ENCODE measurements at regions of chr3 and their contacts with region 1.

Region 1: DNA sequence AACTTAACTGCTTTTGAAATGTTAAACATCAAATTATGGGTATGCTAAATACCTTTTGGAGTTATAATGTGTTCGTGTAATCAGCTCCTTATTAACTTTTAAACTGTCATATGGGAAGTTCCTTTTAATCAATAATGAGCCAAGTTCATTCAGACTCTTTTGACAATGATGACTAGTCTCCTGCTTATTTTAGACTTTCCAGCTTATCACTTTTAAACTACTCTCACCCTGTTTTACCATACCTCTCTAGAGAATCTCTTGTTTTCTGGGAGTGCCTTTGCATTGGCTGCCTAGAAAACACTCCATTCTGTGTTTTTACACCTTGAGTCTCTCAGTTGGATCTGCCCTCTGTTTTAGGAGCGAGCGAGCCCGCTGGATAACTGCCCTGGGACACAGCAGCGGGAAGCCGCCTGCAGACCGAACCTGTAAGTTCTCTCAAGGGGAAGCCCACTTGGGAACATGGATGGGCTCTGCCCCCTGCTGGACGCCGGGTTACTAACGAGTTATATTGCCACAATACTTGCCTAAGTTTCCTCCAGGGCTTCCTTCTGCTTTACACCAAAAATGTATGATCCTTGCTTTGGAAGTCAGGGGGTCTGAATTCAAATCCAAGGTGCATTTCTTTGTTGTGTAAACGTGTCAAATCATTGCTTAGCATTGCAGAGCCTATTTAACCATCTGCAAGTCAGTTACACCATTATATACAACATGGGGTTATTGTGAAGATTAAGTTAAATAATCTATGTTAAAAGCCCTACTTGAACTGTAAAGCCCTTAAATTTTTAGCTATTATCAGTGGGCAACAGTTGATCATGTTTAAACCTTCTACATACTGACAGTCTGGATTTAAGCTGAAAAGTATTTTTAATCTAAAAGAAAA is 71.3 kb downstream of the DHX36 start:
- DNase-seq: peak; percentile 97

Region 2: GRCh38 chr3:154003649-154004048 is 249.3 kb before region 1 on chr3:
- intact Hi-C with region 1: loop called in 1 of 2 experiments (anchors 10 kb)
- DNase-seq: no peak

Region 3: DNA sequence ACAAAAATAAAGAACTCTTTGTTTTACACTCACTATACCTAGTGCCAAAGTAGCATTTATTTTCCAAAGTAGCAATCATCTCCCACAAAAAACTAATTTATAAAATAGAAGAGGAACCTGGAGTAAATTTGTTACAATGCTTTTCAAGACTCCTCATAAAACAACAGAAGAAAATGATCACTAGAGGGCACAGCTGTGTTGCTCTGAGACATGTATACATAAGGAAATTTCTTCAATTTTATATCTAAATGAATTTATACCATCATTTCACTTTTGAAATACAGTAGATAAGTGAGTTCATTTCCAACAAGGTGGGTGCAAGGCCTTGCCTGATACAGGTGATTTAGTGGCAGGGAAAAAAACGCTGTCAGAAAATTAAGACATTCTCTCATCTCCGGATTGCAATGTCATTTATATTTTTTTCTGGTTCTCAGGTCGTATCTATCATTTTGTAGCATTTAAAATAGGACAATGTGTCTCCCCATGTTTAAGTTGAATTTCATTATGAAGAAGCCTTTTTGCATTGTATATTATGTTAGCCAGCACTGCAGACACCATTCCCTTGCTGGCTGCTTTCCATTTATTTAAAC is 157.1 kb before region 1 on chr3:
- intact Hi-C with region 1: loop called in 1 of 2 experiments (anchors 10 kb)
- DNase-seq: no peak